Body of pancreas (tissue), 4 donors: ENCODE measurements at regions of chr1 and their contacts with region 1.

Region 1: DNA sequence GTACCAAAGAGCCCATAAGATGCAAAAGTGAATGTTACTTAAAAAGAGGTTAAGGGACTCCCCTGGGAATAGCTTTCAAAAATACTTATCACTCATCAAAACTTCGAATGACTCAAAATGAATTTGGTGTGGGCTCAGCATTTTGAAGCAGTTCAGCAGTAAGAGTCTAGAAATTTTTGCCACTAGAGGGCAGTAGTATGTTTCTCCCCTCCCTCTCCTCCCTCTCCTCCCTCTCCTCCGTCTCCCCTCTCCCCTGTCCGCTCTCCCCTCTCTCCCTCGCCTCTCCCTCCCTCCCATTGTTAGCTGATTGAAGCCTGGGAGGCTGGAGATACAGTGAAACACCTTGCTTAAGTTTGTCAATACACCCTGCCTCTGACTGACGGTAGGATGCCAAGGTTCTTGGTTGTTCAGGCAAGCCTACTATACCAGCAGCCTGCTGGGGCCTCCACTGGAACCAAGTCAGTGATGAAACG is 70.8 kb upstream of the TENT5C start:
- DNase-seq: peak; percentile 61 to 81 (median 69)
- ATAC-seq: peak; percentile 88
- H3K4me3 ChIP-seq: no peak overlapping the region
- H3K27ac ChIP-seq: peak overlapping the region in 1 of 4 donors; percentile 52
- H3K4me1 ChIP-seq: peaks cover 26% of the 10 kb centered on the region
- H3K27me3 ChIP-seq: no peaks in the 10 kb centered on the region
- CTCF ChIP-seq: peak; percentile 60 to 94 (median 75)
- POLR2A ChIP-seq: no peak

Region 2: GRCh38 chr1:117605774-117606648 is 71.0 kb after region 1 on chr1 and contains the start of gene TENT5C:
- intact Hi-C with region 1: loop called (anchors 10 kb)
- DNase-seq: peak; percentile 99
- ATAC-seq: peak; percentile 92
- H3K4me3 ChIP-seq: peak within 1 kb of the TSS; percentile 73 to 87
- H3K27ac ChIP-seq: peak within 1 kb of the TSS; percentile 87 to 95 (median 92)
- H3K4me1 ChIP-seq: peaks cover 17% of the 10 kb centered on the region
- H3K27me3 ChIP-seq: no peaks in the 10 kb centered on the region
- CTCF ChIP-seq: peak in 1 of 7 experiments; percentile 7
- POLR2A ChIP-seq: peak; percentile 97 to 98 (median 98)
- total RNA-seq, gene TENT5C: 30.0 to 39.7 TPM

Region 3: DNA sequence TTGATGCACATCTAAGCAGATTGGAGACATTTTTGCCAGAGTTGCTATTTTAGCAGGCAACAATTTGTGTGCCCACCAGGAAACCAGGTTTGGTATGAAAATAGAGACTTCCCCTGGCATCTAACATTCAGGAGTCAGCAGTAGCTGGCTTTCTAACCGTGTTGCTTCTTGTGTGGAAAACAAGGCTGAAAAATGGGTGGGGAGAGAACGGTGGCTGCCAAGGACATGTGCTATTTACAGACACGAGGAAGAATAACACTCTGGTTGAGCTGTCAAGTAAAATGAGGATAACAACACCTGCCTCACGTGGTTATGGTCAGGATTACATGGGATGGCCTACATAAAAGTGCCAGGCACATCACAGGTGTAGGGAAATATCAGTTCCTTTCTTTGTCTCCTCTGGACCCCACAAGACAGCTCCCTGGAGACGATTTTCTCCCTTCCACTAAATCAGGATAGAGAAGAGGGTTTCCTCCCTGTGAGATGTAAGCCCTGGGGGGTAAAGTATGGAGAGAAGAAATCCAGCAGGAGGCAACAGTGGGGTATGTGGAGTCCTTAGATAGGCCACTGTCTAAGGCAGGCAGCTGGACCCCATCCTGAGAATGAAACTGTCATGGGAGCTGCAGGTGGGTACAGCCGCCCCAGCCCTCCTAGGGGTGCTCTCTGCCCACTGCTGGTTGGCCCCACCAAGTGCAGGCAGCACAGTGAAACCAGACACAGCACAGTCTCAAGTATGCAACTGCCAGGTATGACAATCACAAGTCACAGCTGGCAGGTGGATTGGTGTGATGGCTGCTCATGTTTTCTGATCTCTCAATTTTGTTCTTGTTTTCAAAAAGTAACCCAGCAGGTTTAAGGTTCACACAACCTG is 151.1 kb after region 1 on chr1:
- intact Hi-C with region 1: no loop called
- DNase-seq: peak in 2 of 4 donors; percentile 16 to 25
- ATAC-seq: peak; percentile 20
- H3K4me3 ChIP-seq: no peak overlapping the region
- H3K27ac ChIP-seq: no peak overlapping the region
- H3K4me1 ChIP-seq: peaks cover 22% of the 10 kb centered on the region
- H3K27me3 ChIP-seq: no peaks in the 10 kb centered on the region
- CTCF ChIP-seq: no peak
- POLR2A ChIP-seq: no peak